HCT116 (cell line): ENCODE measurements at regions of chr9 and their contacts with region 1.

Region 1: GRCh38 chr9:15606643-15607472 is 54.0 kb downstream of the CCDC171 start:
- DNase-seq: peak; percentile 22
- ATAC-seq: 0 out of 2 replicates have a peak, but pooled peaks have one; percentile 42
- H3K4me3 ChIP-seq: no peak overlapping the region
- H3K27ac ChIP-seq: no peak overlapping the region
- H3K4me1 ChIP-seq: no peaks in the 10 kb centered on the region
- H3K27me3 ChIP-seq: no peaks in the 10 kb centered on the region
- CTCF ChIP-seq: peak; percentile 47 to 71 (median 57); a peak in 4 of 6 replicates
- POLR2A ChIP-seq: no peak
- RAD21 ChIP-seq: peak; percentile 65

Region 2: DNA sequence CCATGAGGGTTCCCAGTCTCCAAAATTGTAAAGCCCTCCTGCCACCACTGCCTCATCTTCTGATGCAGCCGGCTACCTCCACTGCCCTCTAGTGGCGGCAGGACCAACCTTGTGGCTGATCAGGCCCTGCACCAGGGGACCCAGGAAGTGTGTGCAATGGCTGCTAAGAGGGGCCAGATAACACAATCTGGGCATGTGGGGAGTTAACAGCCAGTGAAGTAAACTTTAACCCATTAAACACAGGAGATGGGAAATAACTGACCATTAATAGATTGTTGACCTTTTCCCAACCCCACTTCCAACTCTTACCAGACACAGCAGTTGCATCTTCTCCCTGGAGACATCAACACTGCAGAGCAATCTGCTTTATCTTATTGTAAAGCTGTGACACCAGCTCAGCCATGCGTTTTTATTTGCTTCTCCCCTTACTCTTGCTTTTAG is 760.0 kb before region 1 on chr9:
- CTCF ChIA-PET with region 1: no interaction called
- POLR2A ChIA-PET with region 1: no interaction called
- RAD21 ChIA-PET with region 1: no interaction called
- intact Hi-C with region 1: loop called (anchors 10 kb)
- DNase-seq: peak; percentile 47
- ATAC-seq: peak; percentile 99
- H3K4me3 ChIP-seq: no peak overlapping the region
- H3K27ac ChIP-seq: no peak overlapping the region
- H3K4me1 ChIP-seq: no peaks in the 10 kb centered on the region
- H3K27me3 ChIP-seq: peaks cover 20% of the 10 kb centered on the region; the same call in 1 of the 2 replicates
- CTCF ChIP-seq: peak; percentile 37 to 93 (median 91); a peak in 5 of 6 replicates
- POLR2A ChIP-seq: no peak
- RAD21 ChIP-seq: peak; percentile 51

Region 3: GRCh38 chr9:15211160-15211814 is 395.6 kb before region 1 on chr9:
- CTCF ChIA-PET with region 1: interaction called, 6 read pairs
- POLR2A ChIA-PET with region 1: no interaction called
- RAD21 ChIA-PET with region 1: no interaction called
- intact Hi-C with region 1: loop called (anchors 1 kb)
- DNase-seq: peak; percentile 50
- ATAC-seq: peak; percentile 73
- H3K4me3 ChIP-seq: no peak overlapping the region
- H3K27ac ChIP-seq: no peak overlapping the region
- H3K4me1 ChIP-seq: no peaks in the 10 kb centered on the region
- H3K27me3 ChIP-seq: no peaks in the 10 kb centered on the region
- CTCF ChIP-seq: peak; percentile 62 to 92 (median 91); a peak in 5 of 6 replicates
- POLR2A ChIP-seq: no peak
- RAD21 ChIP-seq: peak; percentile 67

Region 4: GRCh38 chr9:15485836-15486666 is 120.8 kb before region 1 on chr9:
- CTCF ChIA-PET with region 1: no interaction called
- POLR2A ChIA-PET with region 1: no interaction called
- RAD21 ChIA-PET with region 1: no interaction called
- intact Hi-C with region 1: loop called (anchors 5 kb)
- DNase-seq: no peak
- ATAC-seq: peak; percentile 54; the same call in 1 of the 2 replicates
- H3K4me3 ChIP-seq: no peak overlapping the region
- H3K27ac ChIP-seq: no peak overlapping the region
- H3K4me1 ChIP-seq: no peaks in the 10 kb centered on the region
- H3K27me3 ChIP-seq: no peaks in the 10 kb centered on the region
- CTCF ChIP-seq: peak; percentile 5 to 52 (median 42); a peak in 3 of 6 replicates
- POLR2A ChIP-seq: no peak
- RAD21 ChIP-seq: peak; percentile 34

Region 5: DNA sequence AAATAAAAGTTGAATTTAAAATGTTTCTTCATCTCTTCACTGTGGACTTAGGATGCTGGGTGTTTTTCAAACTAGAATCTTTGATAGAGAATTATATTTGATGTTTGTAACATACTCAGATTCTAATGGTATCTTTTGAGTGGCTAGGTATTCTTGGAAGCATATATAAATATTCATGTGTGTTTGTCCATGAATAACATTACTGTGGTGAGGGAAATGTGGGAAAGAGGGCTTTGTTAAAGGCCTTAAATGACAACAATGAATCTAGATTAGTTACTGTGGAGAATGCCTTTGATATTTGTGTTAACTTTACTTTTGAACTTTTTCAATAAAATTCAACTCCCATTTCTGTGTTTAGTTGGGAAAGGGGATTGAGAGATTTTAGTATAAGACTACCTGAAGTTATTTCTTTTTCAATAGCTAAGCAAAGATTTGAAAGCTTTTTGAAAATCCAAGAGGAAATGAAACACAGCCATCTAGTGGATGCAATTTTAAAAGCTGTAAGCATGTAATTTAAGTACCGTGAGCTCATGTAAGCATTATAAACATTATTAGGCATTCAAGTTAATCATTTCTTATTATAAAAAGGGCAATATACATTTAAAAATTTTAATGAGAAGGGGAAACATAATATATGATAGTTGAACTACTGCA is 15.6 kb after region 1 on chr9:
- CTCF ChIA-PET with region 1: interaction called, 11 read pairs
- POLR2A ChIA-PET with region 1: no interaction called
- RAD21 ChIA-PET with region 1: no interaction called
- intact Hi-C with region 1: no loop called
- DNase-seq: peak; percentile 15
- ATAC-seq: no peak
- H3K4me3 ChIP-seq: no peak overlapping the region
- H3K27ac ChIP-seq: no peak overlapping the region
- H3K4me1 ChIP-seq: no peaks in the 10 kb centered on the region
- H3K27me3 ChIP-seq: no peaks in the 10 kb centered on the region
- CTCF ChIP-seq: peak; percentile 19 to 65 (median 45); a peak in 4 of 6 replicates
- POLR2A ChIP-seq: no peak
- RAD21 ChIP-seq: peak; percentile 56